Tibial artery (tissue), 4 donors: ENCODE measurements at regions of chr18 and their contacts with region 1.

Region 1: GRCh38 chr18:62714671-62715435 is 488 bp upstream of the PHLPP1 start:
- DNase-seq: peak; percentile 100
- H3K4me3 ChIP-seq: peak overlapping the region; percentile 76 to 88
- H3K27ac ChIP-seq: peak overlapping the region; percentile 92 to 93
- H3K4me1 ChIP-seq: peaks cover 0 to 24% (median 10%) of the 10 kb centered on the region in 4 donors
- H3K27me3 ChIP-seq: no peaks in the 10 kb centered on the region
- CTCF ChIP-seq: peak; percentile 77 to 81

Region 2: DNA sequence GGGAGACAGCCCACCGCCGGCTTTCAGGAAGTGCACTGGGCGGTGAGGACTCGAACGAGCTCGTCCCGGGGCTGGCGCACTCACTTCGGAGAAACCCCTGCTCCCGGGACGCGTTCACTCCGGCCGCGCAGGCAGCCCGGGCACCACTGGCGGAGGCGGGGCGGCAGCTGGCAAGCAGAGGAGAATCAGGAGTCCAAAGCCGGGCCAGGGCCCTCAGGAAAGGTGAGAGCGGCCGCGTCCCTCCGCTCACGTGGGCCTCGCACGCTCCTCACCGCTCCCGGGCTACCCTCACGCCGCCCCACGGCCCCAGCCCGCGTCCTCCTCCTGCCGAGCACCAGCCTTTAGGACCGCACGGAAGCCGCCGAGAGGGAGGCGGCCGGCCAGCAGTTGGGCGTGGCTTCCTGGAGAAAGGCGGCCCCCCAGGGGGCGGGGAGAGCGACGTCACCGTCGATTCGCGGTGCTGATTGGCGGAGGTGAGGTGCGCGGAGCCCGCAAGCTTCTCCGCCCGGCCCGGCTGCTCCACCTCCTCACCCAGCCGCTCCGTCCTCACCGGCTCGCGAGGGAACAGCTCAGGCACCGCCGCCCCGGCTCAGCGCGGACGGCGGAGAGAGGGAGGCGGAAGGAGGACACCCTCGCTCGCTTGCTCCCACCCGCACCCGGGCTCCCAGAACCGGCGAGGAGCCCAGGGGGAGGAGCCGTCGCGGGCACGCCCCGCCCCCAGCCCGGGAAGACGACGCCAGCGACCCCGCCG is 192.2 kb before region 1 on chr18 and contains the start of gene ZCCHC2:
- intact Hi-C with region 1: loop called (anchors 5 kb)
- DNase-seq: peak; percentile 96 to 99
- H3K4me3 ChIP-seq: peak within 1 kb of the TSS; percentile 98
- H3K27ac ChIP-seq: peak within 1 kb of the TSS; percentile 99 to 100
- H3K4me1 ChIP-seq: peaks cover 0 to 22% (median 10%) of the 10 kb centered on the region in 4 donors
- H3K27me3 ChIP-seq: no peaks in the 10 kb centered on the region
- CTCF ChIP-seq: no peak

Region 3: GRCh38 chr18:62584241-62585120 is 130.4 kb before region 1 on chr18:
- intact Hi-C with region 1: loop called (anchors 10 kb)
- DNase-seq: peak; percentile 84 to 91
- H3K4me3 ChIP-seq: no peak overlapping the region
- H3K27ac ChIP-seq: no peak overlapping the region
- H3K4me1 ChIP-seq: peaks cover 0 to 19% (median 7%) of the 10 kb centered on the region in 4 donors
- H3K27me3 ChIP-seq: no peaks in the 10 kb centered on the region
- CTCF ChIP-seq: peak; percentile 96 to 99

Region 4: GRCh38 chr18:62877411-62878221 is 162.8 kb after region 1 on chr18:
- intact Hi-C with region 1: loop called (anchors 5 kb)
- DNase-seq: no peak
- H3K4me3 ChIP-seq: no peak overlapping the region
- H3K27ac ChIP-seq: peak overlapping the region in 1 of 2 donors; percentile 50
- H3K4me1 ChIP-seq: peaks cover 0 to 33% (median 12%) of the 10 kb centered on the region in 4 donors
- H3K27me3 ChIP-seq: no peaks in the 10 kb centered on the region
- CTCF ChIP-seq: peak in 1 of 2 experiments; percentile 5

Region 5: DNA sequence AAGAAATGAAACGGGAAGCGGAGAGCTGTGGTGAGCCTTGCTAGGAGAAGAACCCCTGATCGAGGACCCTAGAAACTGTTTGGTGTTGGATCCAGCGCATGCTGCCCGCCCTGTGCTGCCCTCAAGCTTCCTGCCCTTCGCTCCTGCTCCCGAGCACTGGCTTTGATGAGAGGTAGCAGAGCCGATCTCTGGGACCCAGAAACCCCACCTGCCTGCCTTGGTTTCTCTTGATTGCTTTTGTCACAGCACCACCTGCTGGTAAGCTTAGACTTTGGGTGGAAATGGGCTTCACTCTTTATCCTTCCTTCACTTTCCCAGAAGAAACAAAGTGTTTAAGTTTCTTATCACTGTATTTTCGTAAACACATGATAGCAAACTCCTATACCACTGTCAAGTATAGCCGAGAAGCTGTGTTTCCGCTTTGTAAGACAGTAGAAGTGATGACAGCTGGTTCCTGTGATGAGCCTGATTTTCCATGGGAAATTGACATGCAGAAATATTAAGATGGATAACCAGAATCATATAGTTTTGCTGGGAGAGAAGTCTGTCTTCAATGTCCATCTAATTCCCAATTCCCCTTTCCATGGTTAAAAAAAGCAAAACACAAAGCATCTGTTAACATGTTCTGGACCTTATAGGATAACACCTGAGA is 267.9 kb after region 1 on chr18:
- intact Hi-C with region 1: loop called (anchors 2 kb)
- DNase-seq: peak in 1 of 2 donors; percentile 65
- H3K4me3 ChIP-seq: peak overlapping the region; percentile 36 to 39
- H3K27ac ChIP-seq: no peak overlapping the region
- H3K4me1 ChIP-seq: peaks cover 0 to 6% (median 4%) of the 10 kb centered on the region in 4 donors
- H3K27me3 ChIP-seq: no peaks in the 10 kb centered on the region
- CTCF ChIP-seq: peak; percentile 71 to 83

Region 6: DNA sequence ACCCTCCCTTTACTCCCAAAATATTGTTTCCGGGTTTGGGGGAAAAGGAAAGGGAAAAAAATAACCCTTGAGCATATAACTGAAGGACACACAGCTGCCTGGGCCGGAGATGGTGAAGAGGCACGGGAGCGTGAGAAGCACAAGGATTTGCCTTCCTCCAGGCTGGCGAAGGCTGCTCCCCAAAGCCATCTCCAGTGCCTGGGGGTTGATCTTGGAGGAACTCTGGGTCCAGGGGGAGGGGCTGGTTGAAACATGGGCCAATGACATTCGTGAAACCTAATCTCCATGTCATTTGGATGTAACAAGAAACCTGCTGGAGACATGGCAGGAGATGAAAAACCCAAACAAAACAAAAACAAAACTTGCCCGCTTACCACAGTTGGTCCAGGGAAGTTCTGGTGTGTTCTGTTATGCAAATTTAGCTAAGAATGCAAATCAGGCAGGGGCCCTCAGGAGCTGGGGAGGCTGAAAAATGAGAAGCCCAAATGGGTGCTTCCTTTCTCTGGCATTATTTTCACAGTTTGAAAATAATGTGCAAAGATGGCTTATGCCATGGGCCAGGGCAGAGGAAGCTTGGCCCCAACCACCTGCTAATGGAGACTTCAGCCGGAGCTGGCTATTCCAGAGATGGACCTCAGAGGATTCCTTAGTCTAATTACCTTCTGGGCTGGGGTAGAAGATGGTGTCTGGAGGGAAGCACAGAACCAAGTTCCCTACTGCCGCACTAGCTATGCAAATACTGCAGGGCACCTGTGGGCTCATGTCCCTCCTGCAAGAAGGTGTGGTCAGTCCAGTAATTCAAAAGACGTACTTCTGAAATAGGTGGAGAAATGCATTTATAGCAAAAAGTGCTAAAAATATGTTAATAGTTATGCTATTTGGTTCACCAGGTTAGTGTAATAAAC is 423.8 kb after region 1 on chr18:
- intact Hi-C with region 1: loop called (anchors 10 kb)
- DNase-seq: no peak
- H3K4me3 ChIP-seq: no peak overlapping the region
- H3K27ac ChIP-seq: no peak overlapping the region
- H3K4me1 ChIP-seq: peaks cover 0 to 25% (median 0%) of the 10 kb centered on the region in 4 donors
- H3K27me3 ChIP-seq: no peaks in the 10 kb centered on the region
- CTCF ChIP-seq: no peak

Region 7: GRCh38 chr18:63422087-63422809 is 707.4 kb after region 1 on chr18 and contains the start of gene VPS4B:
- intact Hi-C with region 1: loop called (anchors 5 kb)
- DNase-seq: peak; percentile 99 to 100
- H3K4me3 ChIP-seq: peak within 1 kb of the TSS; percentile 78 to 90
- H3K27ac ChIP-seq: peak within 1 kb of the TSS; percentile 90 to 95
- H3K4me1 ChIP-seq: peaks cover 0 to 39% (median 18%) of the 10 kb centered on the region in 4 donors
- H3K27me3 ChIP-seq: no peaks in the 10 kb centered on the region
- CTCF ChIP-seq: no peak